Ovary (tissue), 10 donors: ENCODE measurements at regions of chr17 and their contacts with region 1.

Region 1: GRCh38 chr17:45834471-45835396 is 9.9 kb upstream of the SPPL2C start:
- DNase-seq: no peak
- H3K4me3 ChIP-seq: no peak overlapping the region
- H3K27ac ChIP-seq: no peak overlapping the region
- H3K4me1 ChIP-seq: no peaks in the 10 kb centered on the region
- H3K27me3 ChIP-seq: no peaks in the 10 kb centered on the region
- CTCF ChIP-seq: no peak
- EP300 ChIP-seq: no peak
- POLR2A ChIP-seq: no peak

Region 2: DNA sequence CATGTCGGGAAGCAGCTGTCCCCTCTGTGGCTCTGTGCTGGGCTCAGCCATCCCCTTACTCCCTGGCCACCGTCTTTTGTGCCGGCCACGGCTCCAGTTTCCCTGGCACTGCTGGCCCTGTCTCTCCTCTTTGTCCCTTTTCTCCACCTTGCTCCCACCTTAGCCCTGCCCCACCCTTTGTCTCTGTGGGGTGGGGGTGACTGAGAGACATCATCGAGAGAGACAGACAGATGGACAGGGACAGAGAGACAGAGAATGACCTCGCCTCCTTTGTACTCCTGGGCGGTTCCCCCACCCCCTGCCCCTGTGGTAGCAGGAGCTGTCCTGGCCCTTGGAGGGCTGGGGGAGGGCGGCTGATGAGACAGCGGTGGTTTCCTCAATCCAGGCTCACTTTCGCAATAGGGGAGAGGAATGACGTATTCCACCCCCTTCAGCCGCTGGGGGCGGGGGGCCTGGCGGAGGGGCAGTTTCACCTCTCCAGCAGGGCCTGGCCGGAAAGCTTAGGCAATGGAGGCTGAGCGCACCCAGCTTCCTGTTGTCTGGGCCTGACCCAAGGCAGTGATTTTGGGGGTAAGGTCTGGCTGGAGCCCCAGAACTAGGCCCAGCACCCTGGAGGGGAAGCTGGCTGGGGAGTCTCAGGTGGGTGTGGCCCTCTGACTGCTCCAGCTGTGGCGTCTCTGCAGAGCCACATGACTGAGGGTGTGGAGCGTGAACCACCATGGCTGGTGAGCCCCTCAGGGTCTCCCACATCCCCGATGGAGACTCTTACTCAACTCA is 605.8 kb before region 1 on chr17:
- intact Hi-C with region 1: loop called in 2 of 4 experiments (anchors 10 kb)
- DNase-seq: peak; percentile 61 to 81 (median 74)
- H3K4me3 ChIP-seq: no peak overlapping the region
- H3K27ac ChIP-seq: no peak overlapping the region
- H3K4me1 ChIP-seq: no peaks in the 10 kb centered on the region
- H3K27me3 ChIP-seq: no peaks in the 10 kb centered on the region
- CTCF ChIP-seq: no peak
- EP300 ChIP-seq: no peak
- POLR2A ChIP-seq: no peak

Region 3: DNA sequence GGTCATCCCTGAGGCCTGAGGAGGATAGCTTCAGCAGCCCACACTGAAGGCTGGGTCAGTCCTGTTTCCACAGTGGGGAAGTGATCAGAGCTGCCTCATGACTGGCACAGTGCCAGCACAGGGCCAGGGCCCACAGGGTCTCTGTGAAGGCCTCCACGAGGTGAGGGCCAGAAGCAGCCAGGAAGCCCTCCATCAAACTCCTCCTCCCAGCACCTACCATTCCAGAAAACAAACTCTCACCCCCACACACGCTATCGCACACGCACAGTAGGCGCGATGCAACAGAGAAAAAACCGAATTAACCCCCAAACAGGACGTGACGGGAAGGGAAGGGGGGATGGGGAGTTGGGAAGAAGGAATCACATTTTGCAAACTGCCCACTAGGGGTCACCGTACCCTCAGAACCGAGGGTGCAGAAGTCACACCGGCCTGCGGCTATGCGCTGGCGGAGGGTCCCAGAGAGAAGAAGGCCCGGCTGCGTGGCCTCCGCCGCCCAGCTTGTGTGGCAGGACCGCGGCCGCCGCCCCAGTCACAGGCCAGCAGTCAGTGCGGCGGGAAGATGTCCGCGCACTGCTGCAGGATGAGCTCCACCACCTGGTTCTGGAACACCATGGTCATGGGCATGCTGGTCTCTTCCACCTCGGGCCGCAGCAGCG is 439.7 kb before region 1 on chr17:
- intact Hi-C with region 1: loop called in 1 of 4 experiments (anchors 10 kb)
- DNase-seq: peak; percentile 64 to 79 (median 75)
- H3K4me3 ChIP-seq: peak overlapping the region; percentile 24
- H3K27ac ChIP-seq: no peak overlapping the region
- H3K4me1 ChIP-seq: peaks cover 4% of the 10 kb centered on the region
- H3K27me3 ChIP-seq: no peaks in the 10 kb centered on the region
- CTCF ChIP-seq: peak; percentile 65
- EP300 ChIP-seq: no peak
- POLR2A ChIP-seq: no peak

Region 4: DNA sequence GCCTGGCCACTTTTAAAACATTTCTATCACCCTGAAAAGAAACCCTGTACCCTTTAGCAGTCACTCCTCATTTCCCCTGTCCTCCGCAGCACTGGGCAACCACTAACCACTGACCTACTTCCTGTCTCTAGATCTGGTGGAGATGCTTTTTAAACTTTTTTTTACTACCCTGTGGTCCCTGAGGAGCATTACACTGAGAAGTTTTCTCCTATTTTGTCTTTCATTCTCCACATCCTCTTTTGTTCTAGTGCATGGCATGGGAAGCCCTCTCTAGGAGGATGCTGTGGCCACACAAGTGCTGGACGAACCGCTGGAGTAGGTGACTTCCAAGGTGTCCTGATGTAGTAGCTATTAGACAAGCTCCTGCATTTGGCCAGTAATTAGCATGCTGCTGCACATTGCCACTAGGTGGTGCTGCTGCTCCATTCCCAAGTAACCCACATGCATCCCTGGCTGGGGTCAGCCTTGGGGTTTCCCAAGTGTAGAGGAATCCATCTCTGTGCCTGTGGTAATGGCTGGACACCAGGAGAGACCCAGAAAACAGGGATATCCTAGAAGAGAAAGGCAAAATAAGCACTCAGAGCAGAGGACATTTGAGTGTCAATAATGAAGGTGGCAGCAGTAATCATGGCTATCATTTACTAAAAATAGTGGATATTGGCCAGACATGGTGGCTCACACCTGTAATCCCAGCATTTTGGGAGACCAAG is 194.4 kb before region 1 on chr17:
- intact Hi-C with region 1: loop called (anchors 5 kb)
- DNase-seq: peak; percentile 64 to 78 (median 75)
- H3K4me3 ChIP-seq: no peak overlapping the region
- H3K27ac ChIP-seq: no peak overlapping the region
- H3K4me1 ChIP-seq: no peaks in the 10 kb centered on the region
- H3K27me3 ChIP-seq: no peaks in the 10 kb centered on the region
- CTCF ChIP-seq: peak; percentile 64 to 80 (median 80)
- EP300 ChIP-seq: no peak
- POLR2A ChIP-seq: no peak

Region 5: GRCh38 chr17:46262271-46262670 is 427.5 kb after region 1 on chr17:
- intact Hi-C with region 1: no loop called
- DNase-seq: no peak
- H3K4me3 ChIP-seq: no peak overlapping the region
- H3K27ac ChIP-seq: no peak overlapping the region
- H3K4me1 ChIP-seq: peaks cover 1% of the 10 kb centered on the region
- H3K27me3 ChIP-seq: no peaks in the 10 kb centered on the region
- CTCF ChIP-seq: no peak
- EP300 ChIP-seq: no peak
- POLR2A ChIP-seq: no peak